Activated T-helper 2 cell treated with anti-CD3 and anti-CD28 coated beads, Interferon-gamma antibody, Interleukin-2, Interleukin-4, amounts not matched to agents 10 μg/mL and 5 μg/mL and 100 μg/mL, durations not matched to agents 14 hours and 24 hours and 36 hours (primary cell): ENCODE measurements at regions of chr16 and their contacts with region 1.

Region 1: GRCh38 chr16:30445408-30446202 is at the start of gene SEPHS2:
- DNase-seq: peak; percentile 95
- H3K4me3 Mint-ChIP-seq: peak within 1 kb of the TSS; percentile 88
- H3K27ac Mint-ChIP-seq: peak within 1 kb of the TSS; percentile 94
- H3K4me1 Mint-ChIP-seq: peaks cover 45% of the 10 kb centered on the region
- H3K27me3 Mint-ChIP-seq: no peaks in the 10 kb centered on the region
- total RNA-seq, gene SEPHS2: 82.9 and 84.1 TPM in 2 replicates

Region 2: DNA sequence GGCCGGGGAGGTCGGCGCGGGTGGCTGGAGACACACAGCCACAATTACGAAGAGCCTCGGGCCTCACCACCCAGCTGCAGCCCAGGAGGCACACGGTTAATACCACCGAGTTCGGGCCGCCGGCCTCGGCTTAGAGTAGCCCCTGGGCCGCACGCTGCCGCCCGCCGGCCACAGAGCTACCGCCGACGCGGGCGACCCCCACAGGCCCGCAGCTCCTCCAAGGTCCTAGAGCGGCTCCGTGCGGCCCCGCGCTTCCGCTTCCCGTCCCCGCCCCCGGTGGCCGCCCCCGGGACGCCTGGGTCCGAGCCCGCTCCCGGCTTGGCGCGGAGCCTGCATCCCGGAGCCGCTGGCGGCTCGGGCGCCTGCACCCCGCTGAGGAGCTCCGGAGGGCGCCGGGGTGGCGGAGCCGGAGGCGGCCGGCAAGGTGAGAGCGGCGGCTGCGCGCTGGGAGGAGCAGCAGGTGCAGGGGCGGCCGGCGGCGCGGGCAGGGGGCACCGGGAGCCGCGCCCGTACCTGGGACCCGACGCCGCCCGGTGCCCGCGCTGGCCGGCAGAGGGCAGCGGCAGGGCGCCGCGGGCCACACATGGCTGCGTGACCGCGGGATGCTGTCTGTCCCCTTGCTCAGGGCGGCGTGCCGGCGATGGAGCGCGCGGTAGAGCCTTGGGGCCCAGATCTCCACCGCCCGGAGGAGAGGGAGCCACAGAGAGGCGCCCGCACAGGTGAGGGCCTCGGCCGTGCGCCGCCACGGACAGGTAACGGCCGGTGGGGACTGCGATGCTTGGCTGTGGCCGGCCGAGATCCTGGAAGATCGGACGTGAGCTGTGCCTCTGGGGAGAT is 50.2 kb before region 1 on chr16 and contains the start of gene ZNF48:
- intact Hi-C with region 1: no loop called
- DNase-seq: peak; percentile 41
- H3K4me3 Mint-ChIP-seq: peak within 1 kb of the TSS; percentile 87
- H3K27ac Mint-ChIP-seq: peak within 1 kb of the TSS; percentile 88
- H3K4me1 Mint-ChIP-seq: peaks cover 33% of the 10 kb centered on the region
- H3K27me3 Mint-ChIP-seq: no peaks in the 10 kb centered on the region
- total RNA-seq, gene ZNF48: 13.4 TPM in 2 replicates

Region 3: GRCh38 chr16:30488744-30489605 is 43.4 kb after region 1 on chr16:
- intact Hi-C with region 1: loop called (anchors 5 kb)
- DNase-seq: no peak
- H3K4me3 Mint-ChIP-seq: no peak overlapping the region
- H3K27ac Mint-ChIP-seq: peak overlapping the region; percentile 17
- H3K4me1 Mint-ChIP-seq: peaks cover 29% of the 10 kb centered on the region
- H3K27me3 Mint-ChIP-seq: no peaks in the 10 kb centered on the region

Region 4: DNA sequence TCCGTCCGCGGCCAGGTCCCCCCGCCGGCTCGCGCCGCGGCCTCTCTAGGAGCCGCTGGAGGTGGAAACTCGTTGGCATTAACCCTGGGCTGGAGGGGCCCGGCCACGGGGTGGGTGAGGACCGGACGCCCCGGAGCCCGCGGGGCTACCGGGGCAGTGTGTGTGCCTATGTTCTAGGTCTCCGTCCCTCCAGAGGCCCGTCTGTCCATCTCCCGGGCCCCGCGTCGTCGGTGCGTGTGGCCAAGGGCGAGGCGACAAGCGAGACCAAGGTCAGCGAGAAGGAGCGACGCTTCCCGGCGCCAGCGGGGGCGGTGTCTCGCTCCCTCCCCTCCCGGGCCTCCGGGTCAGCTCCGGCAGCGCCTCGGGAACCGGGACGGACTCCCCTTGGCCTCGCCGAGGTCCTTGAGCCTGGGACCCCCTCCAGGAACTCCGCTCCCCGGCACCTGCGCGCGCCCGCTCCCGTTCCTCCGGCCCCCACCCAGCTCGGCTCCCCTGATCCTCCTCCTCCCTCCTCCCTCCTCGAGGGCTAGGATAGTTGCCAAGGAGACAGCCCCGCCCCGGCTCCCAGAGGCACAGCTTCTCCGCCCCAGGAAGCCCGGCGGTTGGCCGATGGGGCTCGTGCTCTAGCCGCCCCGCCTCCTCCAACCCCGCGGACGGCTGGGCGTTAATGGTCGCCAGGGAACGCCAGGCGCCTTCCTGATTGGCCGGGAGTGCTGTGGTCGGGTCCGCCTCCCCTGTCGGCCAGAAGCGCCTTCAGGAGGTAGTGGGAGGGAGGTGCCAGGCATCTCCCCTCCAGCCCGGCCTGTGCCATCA is 81.4 kb after region 1 on chr16:
- intact Hi-C with region 1: loop called (anchors 5 kb)
- DNase-seq: peak; percentile 94
- H3K4me3 Mint-ChIP-seq: peak overlapping the region; percentile 84
- H3K27ac Mint-ChIP-seq: peak overlapping the region; percentile 67
- H3K4me1 Mint-ChIP-seq: peaks cover 23% of the 10 kb centered on the region
- H3K27me3 Mint-ChIP-seq: no peaks in the 10 kb centered on the region